Ovary (tissue), 10 donors: ENCODE measurements at regions of chr16 and their contacts with region 1.

Region 1: GRCh38 chr16:31179747-31180459 is at the start of gene FUS:
- DNase-seq: peak; percentile 91 to 96 (median 95)
- H3K4me3 ChIP-seq: peak within 1 kb of the TSS; percentile 78
- H3K27ac ChIP-seq: peak within 1 kb of the TSS; percentile 91 to 95
- H3K4me1 ChIP-seq: peaks cover 14% of the 10 kb centered on the region
- H3K27me3 ChIP-seq: no peaks in the 10 kb centered on the region
- CTCF ChIP-seq: peak; percentile 14 to 52 (median 34)
- EP300 ChIP-seq: no peak
- POLR2A ChIP-seq: peak; percentile 98
- total RNA-seq, gene FUS: 62.2 to 436 (median 355) TPM

Region 2: DNA sequence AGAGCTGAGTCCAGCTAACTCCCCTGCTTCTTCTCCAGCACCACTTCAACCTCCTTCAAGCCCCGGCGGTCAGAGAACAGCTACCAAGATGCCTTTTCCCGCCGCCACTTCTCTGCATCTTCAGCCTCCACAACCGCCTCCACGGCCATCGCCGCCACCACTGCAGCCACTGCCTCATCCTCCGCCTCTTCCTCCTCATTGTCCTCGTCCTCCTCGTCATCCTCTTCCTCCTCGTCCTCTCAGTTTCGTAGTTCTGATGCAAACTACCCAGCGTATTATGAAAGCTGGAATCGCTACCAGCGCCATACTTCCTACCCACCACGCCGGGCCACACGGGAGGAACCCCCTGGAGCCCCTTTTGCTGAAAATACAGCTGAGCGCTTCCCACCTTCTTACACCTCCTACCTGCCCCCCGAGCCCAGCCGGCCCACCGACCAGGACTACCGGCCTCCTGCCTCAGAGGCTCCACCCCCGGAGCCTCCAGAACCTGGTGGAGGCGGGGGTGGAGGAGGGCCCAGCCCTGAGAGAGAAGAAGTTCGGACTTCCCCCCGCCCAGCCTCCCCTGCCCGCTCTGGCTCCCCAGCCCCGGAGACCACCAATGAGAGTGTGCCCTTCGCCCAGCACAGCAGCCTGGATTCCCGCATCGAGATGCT is 215.2 kb before region 1 on chr16:
- intact Hi-C with region 1: loop called in 1 of 4 experiments (anchors 10 kb)
- DNase-seq: no peak
- H3K4me3 ChIP-seq: no peak overlapping the region
- H3K27ac ChIP-seq: no peak overlapping the region
- H3K4me1 ChIP-seq: no peaks in the 10 kb centered on the region
- H3K27me3 ChIP-seq: no peaks in the 10 kb centered on the region
- CTCF ChIP-seq: no peak
- EP300 ChIP-seq: no peak
- POLR2A ChIP-seq: no peak

Region 3: GRCh38 chr16:30997000-30997886 is 182.7 kb before region 1 on chr16:
- intact Hi-C with region 1: loop called in 1 of 4 experiments (anchors 10 kb)
- DNase-seq: peak; percentile 76 to 86 (median 81)
- H3K4me3 ChIP-seq: peak overlapping the region; percentile 40
- H3K27ac ChIP-seq: peak overlapping the region; percentile 31 to 33
- H3K4me1 ChIP-seq: peaks cover 19% of the 10 kb centered on the region
- H3K27me3 ChIP-seq: no peaks in the 10 kb centered on the region
- CTCF ChIP-seq: no peak
- EP300 ChIP-seq: no peak
- POLR2A ChIP-seq: no peak

Region 4: DNA sequence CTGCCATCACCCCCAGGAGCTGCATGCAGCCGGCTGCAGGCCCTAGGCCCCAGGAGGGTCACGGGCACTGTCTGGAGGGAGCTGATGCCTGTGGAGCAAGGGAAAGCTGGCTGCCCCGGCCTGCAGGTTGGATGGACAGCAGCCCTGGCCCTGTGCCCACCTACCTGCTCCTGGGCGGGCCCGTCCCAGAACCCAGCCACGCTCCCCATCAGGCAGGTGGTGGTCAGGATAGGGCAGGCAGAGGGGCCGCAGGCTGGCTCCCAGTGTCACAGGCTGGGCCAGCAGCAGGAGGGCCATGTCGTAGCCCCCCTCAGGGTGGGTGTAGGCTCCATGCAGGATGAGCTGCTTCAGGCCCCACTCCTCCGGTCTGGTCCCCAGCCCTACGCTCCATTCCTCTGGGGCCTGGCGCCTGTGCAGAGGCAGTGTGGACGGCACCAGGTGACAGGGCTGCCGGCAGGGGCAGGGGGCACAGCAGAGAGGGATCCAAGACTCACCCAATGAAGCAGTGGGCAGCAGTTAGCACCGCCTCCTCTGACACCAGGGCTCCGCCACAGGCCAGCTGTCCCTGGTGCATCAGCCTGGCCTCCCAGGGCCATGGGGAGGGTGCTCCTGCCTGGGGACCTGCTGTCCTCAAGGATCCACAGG is 95.2 kb before region 1 on chr16:
- intact Hi-C with region 1: loop called in 1 of 4 experiments (anchors 10 kb)
- DNase-seq: no peak
- H3K4me3 ChIP-seq: no peak overlapping the region
- H3K27ac ChIP-seq: no peak overlapping the region
- H3K4me1 ChIP-seq: peaks cover 2% of the 10 kb centered on the region
- H3K27me3 ChIP-seq: no peaks in the 10 kb centered on the region
- CTCF ChIP-seq: no peak
- EP300 ChIP-seq: no peak
- POLR2A ChIP-seq: no peak

Region 5: DNA sequence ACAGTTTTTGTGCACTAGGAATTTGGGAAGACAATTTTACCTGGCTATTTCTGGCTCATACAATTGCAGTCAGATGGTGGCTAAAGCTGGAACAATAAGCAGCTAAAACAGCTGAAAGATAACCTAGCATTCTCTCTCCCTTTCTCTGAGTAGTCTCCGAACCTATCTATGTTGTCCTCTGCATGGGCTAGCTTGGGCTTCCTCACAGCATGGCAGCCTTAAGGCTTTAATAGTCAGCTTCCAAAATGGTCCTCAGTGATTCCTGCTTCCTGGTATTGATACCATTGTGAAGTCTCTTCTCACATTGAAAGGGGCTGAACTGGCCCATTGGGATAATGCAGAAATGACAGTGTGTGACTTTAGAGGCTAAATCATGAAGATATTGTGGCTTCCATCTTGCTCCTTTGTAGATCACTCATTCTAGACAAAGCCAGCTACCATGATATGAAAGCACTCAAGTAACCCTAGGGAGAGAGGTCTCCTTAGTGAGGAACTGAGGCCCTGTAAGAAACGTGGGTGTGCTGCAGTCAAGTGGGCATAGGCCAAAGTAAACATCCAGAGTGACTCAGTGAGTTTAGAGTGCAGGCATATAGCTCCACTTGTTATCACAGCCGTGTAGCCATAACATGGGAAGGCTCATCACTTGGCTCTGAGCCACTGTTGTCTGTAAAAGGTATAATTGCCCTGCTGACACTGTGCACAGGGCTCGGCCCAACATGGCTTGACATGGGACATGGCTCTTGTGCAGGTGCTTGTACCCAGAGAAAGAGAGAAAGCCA is 79.9 kb before region 1 on chr16:
- intact Hi-C with region 1: no loop called
- DNase-seq: peak in 1 of 5 donors; percentile 9
- H3K4me3 ChIP-seq: no peak overlapping the region
- H3K27ac ChIP-seq: no peak overlapping the region
- H3K4me1 ChIP-seq: no peaks in the 10 kb centered on the region
- H3K27me3 ChIP-seq: no peaks in the 10 kb centered on the region
- CTCF ChIP-seq: no peak
- EP300 ChIP-seq: no peak
- POLR2A ChIP-seq: no peak

Region 6: DNA sequence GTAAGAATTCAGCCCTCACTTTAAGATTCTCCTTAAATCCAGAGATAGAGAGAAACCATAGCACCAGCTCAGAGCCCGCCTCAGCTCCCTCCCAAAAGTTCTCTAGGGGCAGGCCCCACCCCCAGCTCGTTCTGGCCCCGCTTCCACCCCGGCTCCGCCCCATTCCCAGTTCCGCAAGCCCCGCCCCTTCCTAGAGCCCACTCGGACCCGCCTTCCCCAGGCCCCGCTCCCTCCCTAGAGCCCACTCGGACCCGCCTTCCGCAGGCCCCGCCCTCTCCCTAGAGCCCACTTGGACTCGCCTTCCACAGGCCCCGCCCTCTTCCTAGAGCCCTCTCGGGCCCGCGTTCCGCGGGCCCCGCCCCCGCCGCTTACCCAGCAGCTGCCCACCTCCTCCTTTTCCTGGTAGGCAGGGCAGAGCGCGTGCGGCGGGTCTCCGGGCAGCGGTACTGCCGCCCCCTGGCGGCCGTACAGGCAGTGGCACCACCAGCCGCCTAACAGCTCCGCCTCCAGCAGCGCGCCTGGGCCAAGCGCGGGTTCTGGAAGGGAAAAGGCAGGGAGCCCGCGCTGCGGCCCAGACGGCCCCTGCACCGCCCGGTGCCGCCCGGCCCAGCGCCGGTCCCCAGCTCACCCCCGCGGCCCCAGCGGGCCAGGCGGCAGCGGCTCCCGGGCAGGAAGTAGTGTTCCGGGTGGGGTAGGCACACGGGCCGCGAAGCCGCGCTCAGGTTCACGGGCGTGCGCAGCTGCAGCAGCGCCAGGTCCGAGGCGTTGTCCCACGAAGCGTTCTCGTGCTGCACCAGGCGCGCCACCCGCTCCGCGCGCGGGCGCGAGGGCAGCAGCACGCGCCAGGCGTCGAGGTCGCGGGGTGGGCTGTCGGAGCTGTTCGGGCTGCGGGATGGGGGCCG is 37.5 kb before region 1 on chr16:
- intact Hi-C with region 1: loop called in 1 of 4 experiments (anchors 10 kb)
- DNase-seq: peak; percentile 99 to 100 (median 100)
- H3K4me3 ChIP-seq: peak overlapping the region; percentile 49
- H3K27ac ChIP-seq: peak overlapping the region; percentile 17 to 53
- H3K4me1 ChIP-seq: peaks cover 7% of the 10 kb centered on the region
- H3K27me3 ChIP-seq: no peaks in the 10 kb centered on the region
- CTCF ChIP-seq: peak; percentile 95 to 99 (median 99)
- EP300 ChIP-seq: peak; percentile 28
- POLR2A ChIP-seq: peak; percentile 19

Region 7: GRCh38 chr16:31440516-31441184 is 260.7 kb after region 1 on chr16:
- intact Hi-C with region 1: loop called in 1 of 4 experiments (anchors 5 kb)
- DNase-seq: no peak
- H3K4me3 ChIP-seq: no peak overlapping the region
- H3K27ac ChIP-seq: no peak overlapping the region
- H3K4me1 ChIP-seq: no peaks in the 10 kb centered on the region
- H3K27me3 ChIP-seq: no peaks in the 10 kb centered on the region
- CTCF ChIP-seq: no peak
- EP300 ChIP-seq: no peak
- POLR2A ChIP-seq: no peak

Region 8: GRCh38 chr16:31700526-31701388 is 520.9 kb after region 1 on chr16:
- intact Hi-C with region 1: loop called in 1 of 4 experiments (anchors 10 kb)
- DNase-seq: peak; percentile 79 to 88 (median 84)
- H3K4me3 ChIP-seq: peak overlapping the region; percentile 78
- H3K27ac ChIP-seq: peak overlapping the region in 1 of 2 donors; percentile 49
- H3K4me1 ChIP-seq: no peaks in the 10 kb centered on the region
- H3K27me3 ChIP-seq: no peaks in the 10 kb centered on the region
- CTCF ChIP-seq: no peak
- EP300 ChIP-seq: no peak
- POLR2A ChIP-seq: no peak